Dorsolateral prefrontal cortex (tissue), 120 donors: ENCODE measurements at regions of chr9 and their contacts with region 1.

Region 1: GRCh38 chr9:127970401-127971313 is 10.1 kb downstream of the EEIG1 start:
- DNase-seq: no peak
- H3K4me3 ChIP-seq: peak overlapping the region in 35 of 59 donors; percentile 0 to 96 (median 26)
- H3K27ac ChIP-seq: peak overlapping the region; percentile 85 to 100 (median 97)
- H3K27me3 ChIP-seq: no peaks in the 10 kb centered on the region
- CTCF ChIP-seq: no peak

Region 2: GRCh38 chr9:127950513-127951289 is 20.0 kb before region 1 on chr9:
- intact Hi-C with region 1: loop called (anchors 2 kb)
- DNase-seq: peak in 9 of 10 donors; percentile 90 to 98 (median 95)
- H3K4me3 ChIP-seq: peak overlapping the region; percentile 18 to 75 (median 55)
- H3K27ac ChIP-seq: peak overlapping the region; percentile 78 to 100 (median 97)
- H3K27me3 ChIP-seq: no peaks in the 10 kb centered on the region
- CTCF ChIP-seq: peak in 1 of 56 donors; percentile 22